ENCODE measurements at regions of chr5 and their contacts with region 1.

Region 1: DNA sequence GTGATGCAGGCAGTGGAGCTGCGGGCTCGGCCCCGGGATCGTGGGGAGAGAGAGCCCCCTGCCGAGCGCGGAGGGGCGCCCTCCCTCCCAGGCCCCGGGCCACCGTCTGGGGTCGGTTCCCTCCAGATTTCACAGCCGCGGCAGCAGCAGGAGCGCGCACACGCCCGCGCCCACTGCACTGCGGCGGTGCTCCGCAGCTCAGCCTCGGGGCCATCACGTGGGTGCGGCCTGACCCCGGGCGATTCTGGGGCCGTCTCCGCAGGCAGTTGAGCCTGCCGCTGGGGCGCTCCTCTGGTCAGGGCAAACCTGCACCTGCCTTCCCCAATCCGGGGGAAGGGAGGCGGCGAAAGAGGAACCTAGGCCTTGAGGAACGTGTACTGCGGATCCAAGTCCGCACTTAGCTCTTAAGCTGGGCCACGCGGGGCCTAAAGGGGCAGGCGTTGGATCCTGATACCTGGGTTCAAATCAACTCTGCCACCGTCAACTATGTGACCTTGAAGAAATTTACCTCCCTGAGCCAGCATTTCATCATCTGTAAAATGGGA is 9.4 kb upstream of the DELE1 start:
- DNase-seq: peak; percentile 36
- ATAC-seq: peak; percentile 81
- H3K4me3 Mint-ChIP-seq: peak overlapping the region; percentile 29
- H3K27ac Mint-ChIP-seq: no peak overlapping the region
- H3K4me1 Mint-ChIP-seq: peaks cover 11% of the 10 kb centered on the region
- H3K27me3 Mint-ChIP-seq: peaks cover 21% of the 10 kb centered on the region
- CTCF ChIP-seq: peak; percentile 1

Region 2: GRCh38 chr5:141866149-141867120 is 47.8 kb before region 1 on chr5:
- CTCF ChIA-PET with region 1: no interaction called
- POLR2A ChIA-PET with region 1: no interaction called
- intact Hi-C with region 1: no loop called
- DNase-seq: no peak
- ATAC-seq: no peak
- H3K4me3 Mint-ChIP-seq: no peak overlapping the region
- H3K27ac Mint-ChIP-seq: no peak overlapping the region
- H3K4me1 Mint-ChIP-seq: no peaks in the 10 kb centered on the region
- H3K27me3 Mint-ChIP-seq: peaks cover 10% of the 10 kb centered on the region
- CTCF ChIP-seq: no peak

Region 3: DNA sequence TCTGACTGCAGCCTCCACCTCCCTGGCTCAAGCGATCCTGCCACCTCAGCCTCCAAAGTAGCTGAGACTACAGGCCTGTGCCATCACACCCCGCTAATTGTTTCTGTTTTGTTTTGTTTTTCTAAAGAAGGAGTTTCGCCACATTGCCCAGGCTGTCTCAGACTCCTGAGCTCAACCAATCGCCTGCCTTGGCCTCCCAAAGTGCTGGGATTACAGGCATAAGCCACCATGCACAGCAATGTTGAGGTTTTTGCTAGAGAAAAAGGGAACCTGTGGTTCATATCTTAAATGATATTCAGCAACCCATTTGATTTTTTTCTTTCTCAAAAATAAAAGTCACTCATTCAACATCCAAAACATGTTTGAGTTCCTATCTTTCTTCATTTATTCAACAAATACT is 11.0 kb before region 1 on chr5:
- CTCF ChIA-PET with region 1: no interaction called
- POLR2A ChIA-PET with region 1: no interaction called
- intact Hi-C with region 1: no loop called
- DNase-seq: no peak
- ATAC-seq: no peak
- H3K4me3 Mint-ChIP-seq: no peak overlapping the region
- H3K27ac Mint-ChIP-seq: no peak overlapping the region
- H3K4me1 Mint-ChIP-seq: no peaks in the 10 kb centered on the region
- H3K27me3 Mint-ChIP-seq: peaks cover 7% of the 10 kb centered on the region
- CTCF ChIP-seq: no peak

Region 4: DNA sequence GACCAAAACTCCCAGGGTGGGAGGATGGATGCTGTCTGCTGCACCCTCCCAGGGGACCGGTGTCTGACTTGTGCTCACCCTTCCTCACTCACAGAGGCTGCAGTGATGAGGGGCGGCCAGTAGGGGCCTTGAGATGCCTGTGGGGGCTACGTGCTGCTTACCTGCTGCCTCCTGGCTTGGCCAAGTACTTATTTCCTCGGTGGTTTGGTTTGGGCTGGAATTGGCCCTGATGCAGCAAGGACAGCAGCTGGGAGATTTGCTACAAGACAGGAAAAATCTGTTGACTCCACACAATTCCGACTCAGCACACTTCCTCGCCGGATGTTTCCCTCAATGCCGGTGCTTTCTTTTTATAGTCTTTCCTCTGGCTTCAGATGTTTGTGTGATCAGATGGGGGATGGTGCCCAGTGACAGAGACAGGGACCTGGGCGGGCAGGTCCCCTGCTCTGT is 37.1 kb after region 1 on chr5:
- CTCF ChIA-PET with region 1: interaction called, 3 read pairs
- POLR2A ChIA-PET with region 1: no interaction called
- intact Hi-C with region 1: loop called (anchors 5 kb)
- DNase-seq: peak; percentile 55
- ATAC-seq: peak; percentile 96
- H3K4me3 Mint-ChIP-seq: no peak overlapping the region
- H3K27ac Mint-ChIP-seq: peak overlapping the region; percentile 37
- H3K4me1 Mint-ChIP-seq: peaks cover 9% of the 10 kb centered on the region
- H3K27me3 Mint-ChIP-seq: no peaks in the 10 kb centered on the region
- CTCF ChIP-seq: peak; percentile 60

Region 5: GRCh38 chr5:141976176-141976575 is 61.9 kb after region 1 on chr5:
- CTCF ChIA-PET with region 1: no interaction called
- POLR2A ChIA-PET with region 1: no interaction called
- intact Hi-C with region 1: no loop called
- DNase-seq: no peak
- ATAC-seq: no peak
- H3K4me3 Mint-ChIP-seq: no peak overlapping the region
- H3K27ac Mint-ChIP-seq: no peak overlapping the region
- H3K4me1 Mint-ChIP-seq: peaks cover 29% of the 10 kb centered on the region
- H3K27me3 Mint-ChIP-seq: no peaks in the 10 kb centered on the region
- CTCF ChIP-seq: no peak

Measured in activated CD8-positive, alpha-beta T cell treated with anti-CD3 and anti-CD28 coated beads for 36 hours (primary cell).